ENCODE measurements at regions of chr1 and their contacts with region 1.

Region 1: DNA sequence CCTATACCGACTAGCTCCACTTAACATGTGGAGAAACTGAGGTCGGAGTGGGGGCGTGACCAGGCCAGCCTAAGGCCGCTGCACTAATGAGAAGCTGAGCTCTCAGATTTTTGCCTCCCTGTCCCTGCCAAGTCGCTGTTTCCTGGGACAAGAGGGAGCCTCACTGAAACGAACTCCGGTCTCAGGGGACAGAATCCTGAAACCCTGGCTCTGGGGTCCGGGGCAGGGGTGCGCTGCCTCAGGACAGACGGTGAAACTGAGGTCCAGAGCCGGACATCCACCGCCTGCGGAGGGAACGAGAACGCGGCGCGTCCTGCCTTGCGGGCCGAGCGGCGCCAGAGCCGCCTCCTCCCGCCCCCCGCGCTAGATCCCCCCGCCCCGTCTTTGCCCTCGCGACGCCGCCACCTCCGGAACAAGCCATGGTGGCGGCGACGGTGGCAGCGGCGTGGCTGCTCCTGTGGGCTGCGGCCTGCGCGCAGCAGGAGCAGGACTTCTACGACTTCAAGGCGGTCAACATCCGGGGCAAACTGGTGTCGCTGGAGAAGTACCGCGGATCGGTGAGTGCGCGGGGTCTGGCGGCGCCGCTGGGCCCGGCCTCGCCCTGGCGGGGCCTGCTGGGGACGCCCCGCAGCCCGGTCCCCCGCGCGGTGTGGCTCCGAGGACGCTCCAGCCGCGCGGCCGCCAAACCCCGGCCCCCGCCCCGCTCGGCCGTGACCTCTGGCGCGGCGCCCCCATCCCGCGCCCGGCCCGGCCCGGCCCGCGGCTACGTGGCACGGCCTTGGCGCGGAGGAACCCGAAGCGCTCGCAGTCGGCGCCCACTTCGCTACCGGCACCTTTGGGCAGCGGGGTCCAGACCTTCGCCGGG is at the start of gene GPX7:
- DNase-seq: peak; percentile 68
- H3K4me3 Mint-ChIP-seq: peak within 1 kb of the TSS; percentile 86
- H3K27ac Mint-ChIP-seq: peak within 1 kb of the TSS; percentile 85
- H3K4me1 Mint-ChIP-seq: peaks cover 35% of the 10 kb centered on the region
- H3K27me3 Mint-ChIP-seq: no peaks in the 10 kb centered on the region
- total RNA-seq, gene GPX7: 21.2 to 23.5 TPM

Region 2: DNA sequence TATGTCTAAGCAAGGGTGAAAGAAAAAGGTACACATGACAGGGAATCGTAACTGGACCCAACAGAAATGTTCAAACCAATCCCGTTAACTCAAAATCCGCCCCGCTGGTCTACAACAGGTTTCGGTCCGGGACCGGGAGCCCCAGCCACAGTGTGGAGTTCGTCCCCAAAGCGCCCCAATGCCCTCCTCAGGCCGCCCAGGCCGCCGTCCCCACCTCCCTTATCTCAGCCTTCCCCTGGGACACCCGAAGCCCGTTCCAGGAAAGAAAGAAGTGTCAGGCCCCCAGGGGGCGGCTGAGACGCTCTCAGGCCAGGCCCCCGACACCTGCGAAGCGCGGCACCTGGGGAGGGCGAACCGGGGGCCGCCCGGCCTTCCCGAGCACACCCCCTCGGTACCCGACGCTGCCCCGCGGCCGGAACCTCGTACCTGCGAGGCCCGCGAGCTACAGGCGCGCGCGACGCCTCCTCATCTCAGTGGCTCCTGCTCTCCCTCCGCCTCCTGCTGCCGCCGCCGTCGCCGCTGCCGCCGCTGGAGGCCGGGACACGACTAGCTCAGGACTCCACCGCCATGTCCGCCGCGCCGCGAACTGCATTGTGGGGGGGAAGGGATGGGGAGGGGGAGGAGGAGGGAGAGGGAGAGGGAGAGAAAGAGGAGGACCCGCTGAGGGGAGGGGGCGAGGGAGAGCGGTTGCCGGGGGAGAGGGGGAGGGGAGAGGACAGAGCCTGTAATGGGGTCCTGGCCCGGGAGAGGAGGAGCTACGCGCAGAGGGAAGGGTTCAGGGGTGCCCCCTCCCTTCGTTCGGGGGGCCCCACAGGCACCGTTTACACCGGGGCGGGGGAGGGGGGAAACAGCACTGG is 49.5 kb before region 1 on chr1 and contains the start of gene TUT4:
- CTCF ChIA-PET with region 1: no interaction called
- POLR2A ChIA-PET with region 1: interaction called, 13 read pairs
- DNase-seq: peak; percentile 81
- H3K4me3 Mint-ChIP-seq: no peak within 1 kb of the TSS
- H3K27ac Mint-ChIP-seq: peak within 1 kb of the TSS; percentile 3
- H3K4me1 Mint-ChIP-seq: peaks cover 21% of the 10 kb centered on the region
- H3K27me3 Mint-ChIP-seq: no peaks in the 10 kb centered on the region
- total RNA-seq, gene TUT4: 68.1 to 71.8 TPM